Adrenal gland (tissue), 19 donors: ENCODE measurements at regions of chr6 and their contacts with region 1.

Region 1: DNA sequence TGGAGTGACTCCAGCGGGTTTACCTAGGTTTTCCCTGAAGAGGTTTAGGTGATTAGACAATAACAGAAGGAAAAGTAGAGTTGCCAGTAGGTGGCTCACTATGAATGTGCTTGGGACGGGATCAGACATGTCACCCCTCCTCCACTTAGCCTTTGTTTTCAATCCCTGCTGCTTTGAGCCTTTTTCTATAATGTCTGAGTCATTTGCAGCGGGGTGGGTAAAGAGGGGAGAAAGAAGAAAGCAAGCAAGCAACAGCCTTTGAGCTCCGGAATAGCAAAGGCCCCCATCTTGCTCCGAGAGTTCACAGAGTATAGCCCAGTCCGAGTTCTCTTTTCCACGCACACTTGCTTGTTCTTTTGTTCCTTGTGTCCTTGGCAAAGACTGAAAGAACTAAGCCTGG is 129.1 kb downstream of the PACRG start:
- DNase-seq: peak; percentile 62 to 80 (median 74)
- H3K4me3 ChIP-seq: peak overlapping the region in 2 of 4 donors; percentile 14 to 38
- H3K27ac ChIP-seq: peak overlapping the region in 3 of 5 donors; percentile 9 to 45 (median 27)
- H3K4me1 ChIP-seq: peaks cover 0 to 3% of the 10 kb centered on the region in 2 donors
- H3K27me3 ChIP-seq: no peaks in the 10 kb centered on the region
- CTCF ChIP-seq: peak; percentile 55 to 74 (median 68)
- POLR2A ChIP-seq: peak in 1 of 2 donors; percentile 46

Region 2: GRCh38 chr6:163956571-163957407 is 1099.9 kb after region 1 on chr6:
- intact Hi-C with region 1: loop called in 1 of 2 experiments (anchors 10 kb)
- DNase-seq: peak; percentile 79 to 94 (median 87)
- H3K4me3 ChIP-seq: no peak overlapping the region
- H3K27ac ChIP-seq: no peak overlapping the region
- H3K4me1 ChIP-seq: peaks cover 0 to 7% of the 10 kb centered on the region in 2 donors
- H3K27me3 ChIP-seq: no peaks in the 10 kb centered on the region
- CTCF ChIP-seq: peak; percentile 78 to 98 (median 95)
- POLR2A ChIP-seq: no peak